B cell (primary cell): ENCODE measurements at regions of chr20 and their contacts with region 1.

Region 1: DNA sequence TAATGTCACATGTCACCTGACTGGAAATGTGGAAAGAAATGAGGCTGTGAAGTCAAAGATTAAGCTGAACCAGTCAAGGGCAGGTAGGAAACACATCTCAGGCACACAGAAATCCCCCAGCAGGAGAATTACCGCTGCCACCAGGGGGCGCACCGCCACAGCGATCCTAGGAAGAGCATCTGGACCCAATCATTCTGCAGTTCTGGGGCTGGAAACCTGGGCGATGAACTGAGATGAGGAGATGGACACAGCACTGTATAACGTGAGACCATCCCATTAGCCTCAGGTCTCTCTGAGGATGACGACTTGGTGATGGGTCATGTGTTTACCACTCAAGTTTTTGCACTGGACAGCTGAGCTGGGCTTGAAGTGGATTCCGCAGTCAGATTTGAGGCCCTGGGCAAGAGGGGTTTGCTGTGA is 6.5 kb upstream of the SLC24A3 start:
- DNase-seq: peak; percentile 65
- ATAC-seq: no peak
- H3K4me3 ChIP-seq: no peak overlapping the region
- H3K4me3 Mint-ChIP-seq: no peak overlapping the region
- H3K27ac ChIP-seq: no peak overlapping the region
- H3K27ac Mint-ChIP-seq: no peak overlapping the region
- H3K4me1 ChIP-seq: no peaks in the 10 kb centered on the region
- H3K4me1 Mint-ChIP-seq: no peaks in the 10 kb centered on the region
- H3K27me3 ChIP-seq: peaks cover 0 to 19% (median 17%) of the 10 kb centered on the region in 4 experiments
- H3K27me3 Mint-ChIP-seq: peaks cover 54% of the 10 kb centered on the region
- CTCF ChIP-seq: peak; percentile 95

Region 2: DNA sequence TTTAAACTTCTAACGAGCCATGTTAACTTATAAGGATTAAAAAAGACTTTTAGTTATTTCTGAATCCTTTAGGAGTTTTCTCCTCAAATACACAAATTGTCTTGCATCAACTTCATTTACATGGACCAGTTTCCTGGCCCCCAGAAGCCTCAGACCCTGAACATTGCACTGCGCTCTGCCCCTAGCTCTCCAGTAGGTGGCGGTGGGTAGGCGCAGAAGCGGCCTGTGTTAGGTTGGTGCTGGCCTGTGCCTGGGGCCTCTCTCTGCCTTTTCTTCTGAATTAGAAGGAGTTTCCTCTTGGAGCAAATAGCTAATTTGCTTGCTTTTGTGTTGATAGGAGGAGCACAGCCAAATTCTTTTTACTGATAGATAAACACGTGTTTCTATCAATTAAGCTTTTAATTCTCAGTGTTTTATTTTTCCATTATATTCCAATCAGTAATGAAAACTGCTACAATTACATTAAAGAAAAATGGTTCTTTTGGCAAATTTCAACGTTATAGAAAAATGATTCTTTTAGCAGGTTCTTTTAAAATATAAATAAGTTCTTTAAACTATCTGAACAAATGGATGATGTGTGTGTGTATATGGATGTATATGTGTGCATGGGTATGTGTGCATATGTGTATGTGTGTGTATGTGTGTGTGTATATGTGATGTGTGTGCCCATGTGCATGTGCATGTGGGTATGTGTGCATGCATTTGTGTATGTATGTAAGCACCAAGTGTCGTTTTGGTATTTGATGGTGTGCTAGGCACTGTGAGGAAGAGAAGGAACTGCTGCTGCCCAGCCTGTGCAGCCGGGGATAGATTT is 573.6 kb before region 1 on chr20:
- CTCF ChIA-PET with region 1: interaction called, 10 read pairs
- POLR2A ChIA-PET with region 1: no interaction called
- intact Hi-C with region 1: loop called (anchors 10 kb)
- DNase-seq: peak; percentile 67
- ATAC-seq: peak; percentile 93
- H3K4me3 ChIP-seq: no peak overlapping the region
- H3K4me3 Mint-ChIP-seq: no peak overlapping the region
- H3K27ac ChIP-seq: no peak overlapping the region
- H3K27ac Mint-ChIP-seq: no peak overlapping the region
- H3K4me1 ChIP-seq: no peaks in the 10 kb centered on the region
- H3K4me1 Mint-ChIP-seq: no peaks in the 10 kb centered on the region
- H3K27me3 ChIP-seq: no peaks in the 10 kb centered on the region
- H3K27me3 Mint-ChIP-seq: no peaks in the 10 kb centered on the region
- CTCF ChIP-seq: peak; percentile 95

Region 3: GRCh38 chr20:19141998-19142397 is 64.0 kb before region 1 on chr20:
- CTCF ChIA-PET with region 1: no interaction called
- POLR2A ChIA-PET with region 1: no interaction called
- intact Hi-C with region 1: no loop called
- DNase-seq: no peak
- ATAC-seq: no peak
- H3K4me3 ChIP-seq: no peak overlapping the region
- H3K4me3 Mint-ChIP-seq: no peak overlapping the region
- H3K27ac ChIP-seq: no peak overlapping the region
- H3K27ac Mint-ChIP-seq: no peak overlapping the region
- H3K4me1 ChIP-seq: no peaks in the 10 kb centered on the region
- H3K4me1 Mint-ChIP-seq: no peaks in the 10 kb centered on the region
- H3K27me3 ChIP-seq: no peaks in the 10 kb centered on the region
- H3K27me3 Mint-ChIP-seq: peaks cover 3% of the 10 kb centered on the region
- CTCF ChIP-seq: no peak

Region 4: GRCh38 chr20:19223652-19224051 is 17.7 kb after region 1 on chr20:
- CTCF ChIA-PET with region 1: interaction called, 34 read pairs
- POLR2A ChIA-PET with region 1: no interaction called
- intact Hi-C with region 1: no loop called
- DNase-seq: no peak
- ATAC-seq: no peak
- H3K4me3 ChIP-seq: no peak overlapping the region
- H3K4me3 Mint-ChIP-seq: no peak overlapping the region
- H3K27ac ChIP-seq: no peak overlapping the region
- H3K27ac Mint-ChIP-seq: no peak overlapping the region
- H3K4me1 ChIP-seq: no peaks in the 10 kb centered on the region
- H3K4me1 Mint-ChIP-seq: no peaks in the 10 kb centered on the region
- H3K27me3 ChIP-seq: no peaks in the 10 kb centered on the region
- H3K27me3 Mint-ChIP-seq: peaks cover 23% of the 10 kb centered on the region
- CTCF ChIP-seq: no peak